Astrocyte of the cerebellum (primary cell): ENCODE measurements at regions of chr2 and their contacts with region 1.

Region 1: GRCh38 chr2:36854241-36854640 is 112.1 kb downstream of the STRN start:
- DNase-seq: no peak
- H3K4me3 ChIP-seq: no peak overlapping the region
- CTCF ChIP-seq: no peak

Region 2: DNA sequence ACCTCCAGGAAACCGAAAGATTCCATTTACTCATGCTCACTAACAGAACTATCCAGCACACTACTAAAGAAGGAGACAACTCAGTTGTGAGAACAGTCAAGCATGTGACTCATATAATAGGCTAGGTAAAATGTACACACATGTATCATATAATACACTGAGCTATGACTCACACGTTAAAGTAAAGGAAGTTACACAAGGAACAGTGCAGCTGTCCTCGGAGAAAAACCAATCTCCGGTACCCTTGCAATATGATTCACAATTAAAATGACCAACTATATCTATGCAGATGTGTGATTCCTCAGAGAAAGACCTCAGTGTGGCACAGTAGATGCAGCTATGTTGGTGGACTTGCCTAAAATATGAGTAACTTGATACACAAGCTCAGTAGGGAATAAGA is 35.6 kb after region 1 on chr2:
- in situ Hi-C with region 1: loop called (anchors 5 kb)
- DNase-seq: peak; percentile 63
- H3K4me3 ChIP-seq: peak overlapping the region; percentile 0
- CTCF ChIP-seq: no peak